Dendritic cell treated with granulocyte-macrophage colony-stimulating factor and Interleukin-4, amounts not matched to agents 40 ng/mL and 50 ng/mL, for 4 days (primary cell): ENCODE measurements at regions of chr1 and their contacts with region 1.

Region 1: DNA sequence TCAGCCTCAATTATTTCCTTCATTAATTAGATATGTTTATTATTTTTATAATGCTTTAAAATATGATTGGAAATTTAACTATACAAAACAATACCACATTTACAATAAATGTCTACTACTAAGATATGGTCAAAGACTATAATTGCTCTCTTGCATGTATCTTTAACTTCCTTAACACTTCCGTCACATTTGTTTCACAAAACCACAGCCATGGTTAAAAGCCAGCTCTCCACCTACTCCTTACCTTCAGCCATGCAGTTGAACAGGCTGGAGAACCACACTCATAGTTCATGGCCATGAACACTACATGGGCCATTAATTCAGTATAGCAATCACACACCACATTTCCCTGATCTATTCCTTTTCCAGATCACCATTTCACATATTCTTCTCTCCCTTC is 72.2 kb downstream of the NME7 start:
- H3K4me3 Mint-ChIP-seq: no peak overlapping the region
- H3K27ac Mint-ChIP-seq: no peak overlapping the region
- H3K4me1 Mint-ChIP-seq: peaks cover 10% of the 10 kb centered on the region
- H3K27me3 Mint-ChIP-seq: no peaks in the 10 kb centered on the region

Region 2: GRCh38 chr1:169186106-169186505 is 109.3 kb before region 1 on chr1:
- intact Hi-C with region 1: loop called (anchors 10 kb)
- H3K4me3 Mint-ChIP-seq: no peak overlapping the region
- H3K27ac Mint-ChIP-seq: no peak overlapping the region
- H3K4me1 Mint-ChIP-seq: no peaks in the 10 kb centered on the region
- H3K27me3 Mint-ChIP-seq: no peaks in the 10 kb centered on the region

Region 3: GRCh38 chr1:169414952-169415351 is 119.5 kb after region 1 on chr1:
- intact Hi-C with region 1: no loop called
- H3K4me3 Mint-ChIP-seq: no peak overlapping the region
- H3K27ac Mint-ChIP-seq: no peak overlapping the region
- H3K4me1 Mint-ChIP-seq: no peaks in the 10 kb centered on the region
- H3K27me3 Mint-ChIP-seq: no peaks in the 10 kb centered on the region